ENCODE measurements at regions of chr6 and their contacts with region 1.

Region 1: GRCh38 chr6:13574149-13574570 is 241 bp upstream of the SIRT5 start:
- DNase-seq: peak; percentile 95 to 96
- H3K4me3 ChIP-seq: peak overlapping the region in 2 of 3 donors; percentile 71 to 85
- H3K27ac ChIP-seq: peak overlapping the region; percentile 97 to 98 (median 97)
- H3K4me1 ChIP-seq: peaks cover 6 to 11% of the 10 kb centered on the region in 2 donors
- H3K27me3 ChIP-seq: no peaks in the 10 kb centered on the region
- CTCF ChIP-seq: peak in 4 of 6 experiments; percentile 38 to 64 (median 52)
- POLR2A ChIP-seq: peak; percentile 24 to 83

Region 2: GRCh38 chr6:13604546-13605416 is 30.6 kb after region 1 on chr6:
- intact Hi-C with region 1: loop called (anchors 5 kb)
- DNase-seq: no peak
- H3K4me3 ChIP-seq: no peak overlapping the region
- H3K27ac ChIP-seq: no peak overlapping the region
- H3K4me1 ChIP-seq: no peaks in the 10 kb centered on the region
- H3K27me3 ChIP-seq: no peaks in the 10 kb centered on the region
- CTCF ChIP-seq: no peak
- POLR2A ChIP-seq: no peak

Region 3: DNA sequence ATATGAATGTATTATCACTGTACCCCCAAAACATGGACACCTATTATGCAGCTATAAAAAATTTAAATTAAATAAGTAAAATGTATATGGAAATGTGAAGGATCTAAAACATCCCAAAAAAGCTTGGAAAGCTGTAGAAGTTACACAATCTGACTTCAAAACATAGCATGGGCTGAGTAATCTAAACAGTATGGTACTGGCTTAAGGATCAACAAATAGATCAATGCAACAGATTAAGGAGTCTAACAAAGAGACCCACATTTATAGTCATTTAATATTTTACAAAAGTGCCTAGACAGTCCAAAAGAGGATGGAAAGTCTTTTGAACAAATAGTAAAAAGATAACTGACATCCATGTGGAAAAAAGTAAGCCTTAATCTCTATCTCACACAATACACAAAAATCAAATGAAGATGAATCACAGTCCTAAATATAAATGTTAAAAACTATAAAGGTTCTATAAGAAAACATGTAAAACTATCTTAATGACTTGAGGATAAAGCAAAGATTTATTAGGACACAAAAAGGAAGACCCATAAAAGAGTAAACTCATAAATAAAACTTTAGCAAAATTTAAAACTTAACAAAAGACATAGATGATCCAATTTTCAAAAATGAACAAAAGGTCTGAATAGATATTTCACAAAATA is 90.7 kb after region 1 on chr6:
- intact Hi-C with region 1: no loop called
- DNase-seq: no peak
- H3K4me3 ChIP-seq: no peak overlapping the region
- H3K27ac ChIP-seq: no peak overlapping the region
- H3K4me1 ChIP-seq: peaks cover 0 to 22% of the 10 kb centered on the region in 2 donors
- H3K27me3 ChIP-seq: no peaks in the 10 kb centered on the region
- CTCF ChIP-seq: no peak
- POLR2A ChIP-seq: no peak

Measured in thyroid gland (tissue), 4 donors.